GM13976 (cell line): ENCODE measurements at regions of chrX and their contacts with region 1.

Region 1: GRCh38 chrX:96721354-96721753 is 36.7 kb downstream of the DIAPH2 start:
- DNase-seq: peak; percentile 36
- CTCF ChIP-seq: no peak

Region 2: GRCh38 chrX:96182366-96182765 is 539.0 kb before region 1 on chrX:
- in situ Hi-C with region 1: no loop called
- DNase-seq: no peak
- CTCF ChIP-seq: no peak

Region 3: DNA sequence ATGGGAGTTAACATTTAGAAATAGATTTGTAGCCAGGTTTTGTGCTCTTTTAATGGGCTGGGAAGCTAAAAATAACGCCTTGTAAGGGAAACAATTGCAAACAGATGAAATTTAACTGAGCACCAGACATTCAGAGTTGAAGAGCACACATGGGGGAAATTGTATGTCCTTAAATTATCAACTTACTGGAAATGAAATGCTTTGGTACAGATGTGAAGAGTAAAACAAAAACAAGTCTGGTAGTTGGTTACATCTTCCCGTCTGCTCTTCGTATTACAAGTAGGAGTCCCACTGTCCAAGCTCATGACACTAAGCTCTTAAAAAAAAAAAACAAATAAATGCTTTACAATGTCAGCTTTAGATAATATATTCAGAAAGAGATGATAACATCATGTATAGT is 102.8 kb after region 1 on chrX:
- in situ Hi-C with region 1: loop called (anchors 25 kb)
- DNase-seq: no peak
- CTCF ChIP-seq: no peak

Region 4: GRCh38 chrX:97524997-97525396 is 803.6 kb after region 1 on chrX:
- in situ Hi-C with region 1: no loop called
- DNase-seq: no peak
- CTCF ChIP-seq: no peak